Cardiac septum (tissue), 1 donor: ENCODE measurements at regions of chr18 and their contacts with region 1.

Region 1: GRCh38 chr18:62425465-62426195 is 97.2 kb upstream of the ZCCHC2 start:
- DNase-seq: peak; percentile 82

Region 2: DNA sequence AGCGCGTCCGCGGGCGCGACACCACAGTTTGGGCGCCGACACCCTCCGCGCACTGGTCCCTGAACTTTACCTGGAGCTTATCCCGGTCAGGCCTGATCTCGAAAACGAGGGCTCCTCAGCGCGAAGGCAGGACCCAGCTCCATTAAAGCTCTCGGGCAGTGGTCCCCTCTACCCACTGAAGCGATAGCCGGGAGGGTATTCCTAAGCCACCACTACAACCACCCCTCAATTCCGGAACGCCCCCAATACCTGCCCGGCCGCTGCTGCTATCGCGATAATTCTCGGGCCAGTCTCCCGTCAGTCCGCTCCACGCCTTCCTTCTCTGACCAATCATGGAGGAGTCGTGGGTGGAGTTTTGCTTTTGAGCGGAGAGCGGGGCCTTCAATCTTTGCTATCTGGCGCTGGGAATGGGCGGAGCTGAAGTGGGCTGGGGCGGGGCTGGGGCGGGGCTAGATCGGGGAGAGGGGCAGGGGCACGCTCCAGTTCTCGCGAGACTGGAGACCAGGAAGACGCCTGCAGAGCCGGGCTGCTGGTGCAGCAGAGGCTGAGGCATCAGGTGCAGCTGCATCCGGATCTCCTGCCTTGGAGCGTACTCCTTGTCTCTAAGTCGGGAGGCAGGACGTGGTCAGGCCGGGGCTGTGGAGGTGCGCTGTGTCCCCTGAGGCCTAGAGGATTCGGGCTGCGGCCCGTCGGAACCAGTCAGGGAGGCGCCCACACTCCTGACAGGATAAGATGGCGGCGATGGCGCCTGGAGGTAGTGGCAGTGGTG is 238.7 kb before region 1 on chr18 and contains the starts of genes PIGN and RELCH:
- intact Hi-C with region 1: loop called (anchors 2 kb)
- DNase-seq: peak; percentile 97
- total RNA-seq, gene PIGN: 24.8 TPM
- total RNA-seq, gene RELCH: 21.0 TPM

Region 3: DNA sequence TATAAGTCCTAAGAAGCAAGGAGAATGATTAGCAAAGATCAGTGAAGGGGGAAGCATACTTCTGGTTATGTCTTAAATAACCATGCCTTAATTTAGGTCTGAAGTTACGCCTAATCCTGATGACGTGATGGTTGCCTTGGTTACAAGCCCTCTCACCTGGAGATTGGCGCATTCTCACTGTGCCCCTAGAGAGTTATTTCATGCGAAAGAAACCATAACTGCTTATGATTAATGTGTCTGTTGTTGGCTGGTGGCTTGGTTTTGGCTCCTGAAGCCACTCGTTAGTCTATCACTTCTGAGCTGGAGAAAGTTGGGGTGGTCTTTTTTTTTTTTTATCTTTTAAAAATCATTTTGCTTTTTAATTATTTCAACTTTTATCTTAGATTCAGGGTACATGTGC is 53.5 kb before region 1 on chr18:
- intact Hi-C with region 1: no loop called
- DNase-seq: no peak

Region 4: DNA sequence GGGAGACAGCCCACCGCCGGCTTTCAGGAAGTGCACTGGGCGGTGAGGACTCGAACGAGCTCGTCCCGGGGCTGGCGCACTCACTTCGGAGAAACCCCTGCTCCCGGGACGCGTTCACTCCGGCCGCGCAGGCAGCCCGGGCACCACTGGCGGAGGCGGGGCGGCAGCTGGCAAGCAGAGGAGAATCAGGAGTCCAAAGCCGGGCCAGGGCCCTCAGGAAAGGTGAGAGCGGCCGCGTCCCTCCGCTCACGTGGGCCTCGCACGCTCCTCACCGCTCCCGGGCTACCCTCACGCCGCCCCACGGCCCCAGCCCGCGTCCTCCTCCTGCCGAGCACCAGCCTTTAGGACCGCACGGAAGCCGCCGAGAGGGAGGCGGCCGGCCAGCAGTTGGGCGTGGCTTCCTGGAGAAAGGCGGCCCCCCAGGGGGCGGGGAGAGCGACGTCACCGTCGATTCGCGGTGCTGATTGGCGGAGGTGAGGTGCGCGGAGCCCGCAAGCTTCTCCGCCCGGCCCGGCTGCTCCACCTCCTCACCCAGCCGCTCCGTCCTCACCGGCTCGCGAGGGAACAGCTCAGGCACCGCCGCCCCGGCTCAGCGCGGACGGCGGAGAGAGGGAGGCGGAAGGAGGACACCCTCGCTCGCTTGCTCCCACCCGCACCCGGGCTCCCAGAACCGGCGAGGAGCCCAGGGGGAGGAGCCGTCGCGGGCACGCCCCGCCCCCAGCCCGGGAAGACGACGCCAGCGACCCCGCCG is 97.0 kb after region 1 on chr18 and contains the start of gene ZCCHC2:
- intact Hi-C with region 1: loop called (anchors 1 kb)
- DNase-seq: peak; percentile 99
- total RNA-seq, gene ZCCHC2: 19.1 TPM

Region 5: DNA sequence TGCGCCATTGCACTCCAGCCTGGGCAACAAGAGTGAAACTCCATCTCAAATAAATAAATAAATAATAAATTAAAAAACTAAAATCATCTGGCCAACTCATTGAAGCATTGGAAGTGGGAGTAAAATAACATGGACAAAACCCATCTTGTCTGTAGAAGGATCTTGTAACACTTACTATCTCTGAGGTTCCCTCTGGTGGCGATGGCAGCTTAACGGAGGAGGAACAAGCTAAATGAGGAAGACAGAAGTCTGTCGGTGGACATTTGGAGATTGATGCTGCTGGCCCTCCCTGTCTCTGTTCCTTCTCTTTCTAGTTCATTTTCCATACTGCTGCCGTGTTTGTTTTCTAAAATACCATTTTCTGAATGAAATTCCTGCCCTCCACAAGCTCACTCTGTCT is 140.6 kb after region 1 on chr18:
- intact Hi-C with region 1: loop called (anchors 5 kb)
- DNase-seq: no peak

Region 6: GRCh38 chr18:62584241-62585120 is 158.9 kb after region 1 on chr18:
- intact Hi-C with region 1: loop called (anchors 1 kb)
- DNase-seq: peak; percentile 90

Region 7: GRCh38 chr18:62982600-62983251 is 557.1 kb after region 1 on chr18:
- intact Hi-C with region 1: loop called (anchors 5 kb)
- DNase-seq: no peak